Dendritic cell treated with granulocyte-macrophage colony-stimulating factor and Interleukin-4, amounts not matched to agents 40 ng/mL and 50 ng/mL, for 4 days (primary cell): ENCODE measurements at regions of chr20 and their contacts with region 1.

Region 1: GRCh38 chr20:50278674-50279531 is 88.3 kb downstream of the CEBPB start:
- H3K4me3 Mint-ChIP-seq: no peak overlapping the region
- H3K27ac Mint-ChIP-seq: peak overlapping the region; percentile 77
- H3K4me1 Mint-ChIP-seq: peaks cover 93% of the 10 kb centered on the region
- H3K27me3 Mint-ChIP-seq: peaks cover 1% of the 10 kb centered on the region

Region 2: GRCh38 chr20:50226093-50226974 is 52.6 kb before region 1 on chr20:
- intact Hi-C with region 1: no loop called
- H3K4me3 Mint-ChIP-seq: no peak overlapping the region
- H3K27ac Mint-ChIP-seq: peak overlapping the region; percentile 70
- H3K4me1 Mint-ChIP-seq: peaks cover 87% of the 10 kb centered on the region
- H3K27me3 Mint-ChIP-seq: peaks cover 3% of the 10 kb centered on the region

Region 3: GRCh38 chr20:50346372-50347283 is 67.7 kb after region 1 on chr20:
- intact Hi-C with region 1: loop called (anchors 10 kb)
- H3K4me3 Mint-ChIP-seq: peak overlapping the region; percentile 10
- H3K27ac Mint-ChIP-seq: peak overlapping the region; percentile 86
- H3K4me1 Mint-ChIP-seq: peaks cover 78% of the 10 kb centered on the region
- H3K27me3 Mint-ChIP-seq: peaks cover 9% of the 10 kb centered on the region